Naive thymus-derived CD8-positive, alpha-beta T cell (primary cell): ENCODE measurements at regions of chr9 and their contacts with region 1.

Region 1: DNA sequence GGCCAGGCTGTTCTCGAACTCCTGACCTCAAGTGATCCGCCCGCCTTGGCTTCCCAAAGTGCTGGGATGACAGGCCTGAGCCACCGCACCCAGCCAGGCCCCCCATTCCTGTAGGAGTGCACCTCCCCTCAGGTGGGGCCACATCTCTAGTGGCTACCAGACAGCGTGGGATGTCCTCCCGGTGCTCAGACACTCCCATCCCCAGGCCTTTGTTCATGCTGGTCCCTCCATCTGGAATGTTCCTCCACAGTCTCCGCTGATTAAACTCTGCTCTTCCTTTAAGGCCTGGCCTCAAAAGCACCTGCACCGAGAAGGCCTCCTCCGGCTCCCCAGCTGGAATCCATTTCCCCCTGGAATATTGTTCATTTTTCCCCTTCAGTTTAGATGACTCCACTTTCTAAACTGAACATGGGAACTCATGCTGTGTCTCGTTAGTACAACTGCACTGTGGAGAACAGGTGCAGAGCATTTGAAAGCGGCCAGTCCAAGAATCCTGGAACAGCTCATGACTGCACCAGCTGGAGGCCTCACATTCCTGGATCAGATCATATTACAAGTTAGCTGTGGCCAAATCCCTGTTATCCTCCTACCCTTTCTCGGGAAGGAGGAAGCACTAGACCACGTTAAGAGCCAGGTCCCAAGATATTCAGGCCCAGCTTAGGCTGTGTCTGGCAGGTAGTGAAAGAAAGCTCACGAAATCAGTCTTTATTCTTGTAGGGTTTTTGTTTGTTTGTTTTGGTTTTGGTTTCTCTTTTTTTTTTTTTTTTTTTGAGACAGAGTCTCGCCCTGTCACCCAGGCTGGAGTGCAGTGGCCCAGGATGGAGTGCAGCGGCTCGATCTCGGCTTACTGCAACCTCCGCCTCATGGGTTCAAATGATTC is 10.8 kb upstream of the PRRC2B start:
- DNase-seq: no peak
- ATAC-seq: no peak
- H3K4me3 Mint-ChIP-seq: no peak overlapping the region
- H3K27ac Mint-ChIP-seq: peak overlapping the region in 2 of 10 donors; percentile 27 to 55
- H3K4me1 Mint-ChIP-seq: peaks cover 0 to 7% (median 3%) of the 10 kb centered on the region in 4 donors
- H3K27me3 Mint-ChIP-seq: no peaks in the 10 kb centered on the region

Region 2: DNA sequence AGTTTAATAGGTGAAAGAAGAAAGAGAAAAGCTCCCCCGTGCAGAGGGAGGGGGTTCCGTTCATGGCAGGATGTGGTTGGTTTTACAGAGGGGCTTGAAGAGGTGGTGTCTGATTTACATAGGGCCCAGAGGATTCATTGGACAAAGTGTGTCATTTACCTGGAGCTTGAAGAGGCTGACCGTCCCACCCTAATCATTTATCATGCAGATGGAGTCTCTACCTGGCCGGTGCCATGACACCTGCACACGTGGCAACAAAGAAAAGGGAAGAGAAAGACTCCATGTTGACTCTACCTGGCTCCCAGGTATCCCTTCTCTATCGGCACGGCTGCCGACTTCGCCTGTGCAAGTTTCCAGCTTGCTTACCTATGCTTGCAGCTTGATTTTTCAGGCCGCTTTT is 24.5 kb before region 1 on chr9:
- POLR2A ChIA-PET with region 1: no interaction called
- DNase-seq: peak in 8 of 10 donors; percentile 32 to 81 (median 52)
- ATAC-seq: peak; percentile 76 to 83
- H3K4me3 Mint-ChIP-seq: peak overlapping the region; percentile 73 to 96 (median 90)
- H3K27ac Mint-ChIP-seq: peak overlapping the region; percentile 71 to 96 (median 92)
- H3K4me1 Mint-ChIP-seq: peaks cover 13 to 50% (median 33%) of the 10 kb centered on the region in 4 donors
- H3K27me3 Mint-ChIP-seq: no peaks in the 10 kb centered on the region

Region 3: GRCh38 chr9:131393622-131394463 is 10.8 kb after region 1 on chr9 and contains the start of gene PRRC2B:
- POLR2A ChIA-PET with region 1: interaction called, 10 read pairs
- DNase-seq: peak; percentile 74 to 90 (median 82)
- ATAC-seq: peak; percentile 38 to 50
- H3K4me3 Mint-ChIP-seq: peak within 1 kb of the TSS; percentile 93 to 97 (median 94)
- H3K27ac Mint-ChIP-seq: peak within 1 kb of the TSS; percentile 93 to 98 (median 96)
- H3K4me1 Mint-ChIP-seq: peaks cover 27 to 47% (median 47%) of the 10 kb centered on the region in 4 donors
- H3K27me3 Mint-ChIP-seq: no peaks in the 10 kb centered on the region
- polyA plus RNA-seq, gene PRRC2B: 13.4 to 56.3 (median 27.9) TPM

Region 4: GRCh38 chr9:131426545-131426944 is 43.5 kb after region 1 on chr9:
- POLR2A ChIA-PET with region 1: no interaction called
- DNase-seq: no peak
- ATAC-seq: no peak
- H3K4me3 Mint-ChIP-seq: peak overlapping the region in 7 of 10 donors; percentile 7 to 64 (median 33)
- H3K27ac Mint-ChIP-seq: peak overlapping the region in 9 of 10 donors; percentile 31 to 84 (median 69)
- H3K4me1 Mint-ChIP-seq: peaks cover 37 to 85% (median 73%) of the 10 kb centered on the region in 4 donors
- H3K27me3 Mint-ChIP-seq: no peaks in the 10 kb centered on the region

Region 5: GRCh38 chr9:131441441-131441840 is 58.4 kb after region 1 on chr9:
- POLR2A ChIA-PET with region 1: no interaction called
- DNase-seq: peak in 1 of 10 donors; percentile 21
- ATAC-seq: peak in 1 of 2 donors; percentile 46
- H3K4me3 Mint-ChIP-seq: no peak overlapping the region
- H3K27ac Mint-ChIP-seq: peak overlapping the region in 8 of 10 donors; percentile 21 to 88 (median 72)
- H3K4me1 Mint-ChIP-seq: peaks cover 7 to 37% (median 22%) of the 10 kb centered on the region in 4 donors
- H3K27me3 Mint-ChIP-seq: no peaks in the 10 kb centered on the region